Mammary epithelial cell (primary cell): ENCODE measurements at regions of chr11 and their contacts with region 1.

Region 1: DNA sequence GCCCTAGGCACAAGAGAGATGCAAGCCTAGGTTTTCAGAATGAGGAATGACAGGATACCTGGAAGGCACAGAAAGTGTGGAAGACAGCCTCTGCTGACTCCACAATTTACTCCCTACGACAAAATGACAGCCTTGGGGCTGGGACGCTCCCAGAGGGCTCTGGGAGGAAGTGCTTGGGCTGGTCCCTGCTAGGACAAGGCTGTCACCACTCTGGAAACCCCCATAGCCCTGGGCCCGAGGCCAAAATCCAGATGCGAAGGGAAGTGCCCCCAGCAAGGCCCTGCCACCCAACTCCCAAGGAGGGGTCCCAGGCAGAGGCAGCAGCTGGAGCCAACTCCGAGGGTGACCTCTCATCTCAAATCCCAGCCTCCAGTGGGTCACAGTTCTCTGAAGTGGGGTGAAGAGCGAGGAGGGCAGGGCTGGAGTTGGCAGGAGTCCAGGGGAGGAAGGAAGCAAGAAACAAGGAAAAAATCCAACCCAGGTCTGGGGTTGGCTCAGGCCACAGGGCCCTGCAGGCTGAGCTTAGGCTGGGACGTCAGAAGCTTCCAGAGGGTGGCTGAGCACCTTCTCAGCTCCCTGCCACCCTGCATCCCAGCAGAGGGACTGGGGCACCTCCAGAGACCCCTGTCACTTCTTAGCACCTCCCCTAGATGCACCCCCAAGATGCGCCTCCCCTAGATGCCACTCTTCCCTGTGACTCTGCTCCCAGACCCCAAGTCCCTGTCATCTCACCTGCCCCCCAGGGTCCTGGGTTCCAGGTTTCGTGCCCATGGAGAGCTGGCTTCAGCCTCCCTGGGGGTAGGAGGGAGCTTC is 6.2 kb upstream of the CDC42EP2 start:
- DNase-seq: no peak
- H3K4me3 ChIP-seq: no peak overlapping the region
- H3K27ac ChIP-seq: no peak overlapping the region
- H3K4me1 ChIP-seq: no peaks in the 10 kb centered on the region
- H3K27me3 ChIP-seq: no peaks in the 10 kb centered on the region
- CTCF ChIP-seq: no peak

Region 2: GRCh38 chr11:64729851-64730382 is 578.6 kb before region 1 on chr11:
- CTCF ChIA-PET with region 1: no interaction called
- dilution Hi-C with region 1: no loop called
- in situ Hi-C with region 1: no loop called
- intact Hi-C with region 1: no loop called
- DNase-seq: no peak
- H3K4me3 ChIP-seq: no peak overlapping the region
- H3K27ac ChIP-seq: no peak overlapping the region
- H3K4me1 ChIP-seq: no peaks in the 10 kb centered on the region
- H3K27me3 ChIP-seq: peaks cover 2% of the 10 kb centered on the region
- CTCF ChIP-seq: no peak

Region 3: DNA sequence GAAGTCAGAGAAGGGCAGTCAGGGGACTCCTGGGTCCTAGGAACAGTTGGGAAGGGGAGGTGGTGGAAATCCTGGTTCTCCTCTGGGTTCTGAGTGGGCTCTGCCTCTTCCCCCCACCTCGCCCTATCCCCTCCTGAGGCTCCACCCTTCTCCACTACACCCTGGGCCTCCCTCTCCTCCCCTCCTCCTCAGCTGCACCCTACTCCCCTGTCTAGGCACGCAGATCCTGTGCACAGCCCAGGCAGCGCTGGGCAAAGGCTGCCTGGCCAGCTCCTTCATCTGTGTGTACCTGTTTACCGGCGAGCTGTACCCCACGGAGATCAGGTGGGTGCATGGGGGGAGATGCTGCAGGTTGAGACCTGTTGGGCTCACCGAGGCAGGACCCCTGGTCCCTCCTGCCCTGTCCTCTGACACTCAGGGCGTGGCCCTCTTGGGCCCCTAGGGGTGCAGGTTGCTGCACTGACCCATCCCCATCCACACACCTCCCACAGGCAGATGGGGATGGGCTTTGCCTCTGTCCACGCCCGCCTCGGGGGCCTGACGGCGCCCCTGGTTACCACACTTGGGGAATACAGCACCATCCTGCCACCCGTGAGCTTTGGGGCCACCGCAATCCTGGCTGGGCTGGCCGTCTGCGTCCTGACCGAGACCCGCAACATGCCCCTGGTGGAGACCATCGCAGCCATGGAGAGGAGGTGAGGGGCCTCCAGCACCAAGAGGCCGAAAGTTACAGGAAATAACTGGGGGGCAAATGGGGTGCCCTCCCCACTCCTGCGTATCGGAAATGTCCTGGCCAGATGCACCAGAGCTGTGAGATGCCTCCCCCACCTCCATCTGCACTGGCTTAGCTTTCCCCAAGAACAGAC is 72.1 kb before region 1 on chr11:
- CTCF ChIA-PET with region 1: no interaction called
- dilution Hi-C with region 1: loop called (anchors 5 kb)
- in situ Hi-C with region 1: no loop called
- intact Hi-C with region 1: no loop called
- DNase-seq: no peak
- H3K4me3 ChIP-seq: no peak overlapping the region
- H3K27ac ChIP-seq: no peak overlapping the region
- H3K4me1 ChIP-seq: no peaks in the 10 kb centered on the region
- H3K27me3 ChIP-seq: no peaks in the 10 kb centered on the region
- CTCF ChIP-seq: no peak

Region 4: DNA sequence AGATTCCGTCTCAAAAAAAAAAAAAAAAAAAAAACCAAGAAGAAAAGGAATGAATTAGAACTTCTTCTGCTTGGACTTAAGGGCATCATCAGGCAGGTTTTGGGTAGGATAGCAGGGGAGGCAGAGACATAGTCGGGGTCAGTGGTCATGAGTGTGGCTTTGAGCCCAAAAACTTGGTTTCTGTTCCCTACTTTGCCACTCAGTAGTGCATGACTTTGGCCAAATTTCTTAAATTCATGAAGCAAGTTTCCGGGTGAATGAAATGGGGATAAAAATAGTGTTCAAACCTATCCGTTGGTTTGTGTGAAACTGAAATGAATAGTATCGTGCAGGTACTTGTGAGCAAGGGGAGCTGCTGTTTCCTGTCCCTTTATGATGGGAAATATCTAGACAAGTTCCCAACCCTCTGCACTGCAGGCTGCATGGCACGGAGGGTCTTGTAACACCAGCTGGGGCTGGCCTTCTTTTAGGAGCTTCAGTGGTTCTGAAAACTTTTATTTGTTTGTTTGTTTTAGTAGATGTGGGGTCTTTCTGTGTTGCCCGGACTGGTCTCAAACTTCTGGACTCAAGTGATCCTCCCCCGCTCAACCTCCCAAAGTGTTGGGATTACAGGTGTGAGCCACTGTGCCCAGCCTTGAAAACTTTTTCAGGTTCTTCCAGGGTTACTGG is 132.5 kb after region 1 on chr11:
- CTCF ChIA-PET with region 1: no interaction called
- dilution Hi-C with region 1: no loop called
- in situ Hi-C with region 1: no loop called
- intact Hi-C with region 1: no loop called
- DNase-seq: no peak
- H3K4me3 ChIP-seq: no peak overlapping the region
- H3K27ac ChIP-seq: no peak overlapping the region
- H3K4me1 ChIP-seq: peaks cover 12% of the 10 kb centered on the region
- H3K27me3 ChIP-seq: no peaks in the 10 kb centered on the region
- CTCF ChIP-seq: no peak